B cell (primary cell): ENCODE measurements at regions of chr6 and their contacts with region 1.

Region 1: DNA sequence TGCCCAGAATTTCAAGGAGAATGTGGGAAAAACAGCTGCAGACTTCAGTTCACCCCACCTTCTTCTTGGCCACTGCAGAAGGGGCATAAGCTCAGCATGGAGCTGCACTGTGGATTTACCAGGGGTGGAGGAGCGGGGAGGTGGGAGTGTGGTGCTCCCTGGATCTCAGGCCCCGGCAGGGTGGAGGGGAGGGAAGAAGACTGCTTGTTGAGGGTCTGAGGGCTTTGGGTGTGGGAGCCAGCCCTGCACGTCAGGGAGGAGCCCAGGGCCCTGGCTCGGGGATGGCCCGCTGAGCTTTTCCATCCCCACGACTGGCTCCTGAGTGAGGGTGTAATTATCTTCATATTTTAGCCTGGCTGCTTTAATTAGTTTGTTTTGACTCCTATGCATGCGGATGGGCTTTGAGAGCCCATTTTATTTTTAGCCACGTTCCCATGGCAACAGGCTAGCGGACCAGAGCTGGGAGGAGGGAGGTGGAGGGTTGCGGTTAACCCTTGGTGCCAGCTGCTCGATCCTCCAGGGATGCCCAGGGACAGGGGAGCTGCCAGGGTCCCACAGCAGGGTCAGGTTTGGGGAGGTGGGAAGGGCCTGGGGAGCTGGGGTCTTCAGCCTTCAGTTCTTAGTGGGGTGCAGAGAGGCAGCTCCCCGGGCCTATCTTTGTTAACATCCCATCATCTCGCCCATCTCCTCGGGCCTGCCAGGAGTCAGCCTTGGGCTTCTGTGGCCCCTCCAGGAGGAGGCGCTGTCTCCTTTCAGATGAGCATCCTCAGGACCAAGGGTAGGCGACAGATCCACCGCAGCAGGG is 68.2 kb downstream of the RAB44 start:
- DNase-seq: peak; percentile 88
- ATAC-seq: peak; percentile 91
- H3K4me3 ChIP-seq: peak overlapping the region in 1 of 5 experiments; percentile 9
- H3K4me3 Mint-ChIP-seq: peak overlapping the region; percentile 60
- H3K27ac ChIP-seq: no peak overlapping the region
- H3K27ac Mint-ChIP-seq: peak overlapping the region; percentile 60
- H3K4me1 ChIP-seq: peaks cover 45 to 54% of the 10 kb centered on the region in 2 donors
- H3K4me1 Mint-ChIP-seq: peaks cover 41% of the 10 kb centered on the region
- H3K27me3 ChIP-seq: peaks cover 0 to 3% (median 0%) of the 10 kb centered on the region in 4 experiments
- H3K27me3 Mint-ChIP-seq: no peaks in the 10 kb centered on the region
- CTCF ChIP-seq: peak; percentile 92

Region 2: DNA sequence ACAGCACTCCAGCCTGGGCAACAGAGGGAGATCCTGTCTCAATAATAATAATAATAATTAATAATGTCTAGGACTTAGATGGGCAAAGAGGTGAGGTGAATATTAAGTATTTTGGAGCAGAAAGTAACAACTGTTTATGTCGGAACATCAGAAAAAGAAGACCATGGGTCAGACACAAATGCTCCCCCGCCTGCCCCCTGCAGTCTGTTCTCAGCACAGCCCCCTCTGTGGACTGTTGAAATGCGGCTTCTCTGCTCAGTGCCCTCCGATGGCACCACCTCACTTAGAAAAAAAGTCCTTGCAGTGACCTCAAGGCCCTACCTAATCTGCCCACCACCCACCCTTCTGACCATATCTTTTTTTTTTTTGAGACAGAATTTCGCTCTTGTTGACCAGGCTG is 373.2 kb before region 1 on chr6:
- CTCF ChIA-PET with region 1: no interaction called
- POLR2A ChIA-PET with region 1: no interaction called
- intact Hi-C with region 1: no loop called
- DNase-seq: no peak
- ATAC-seq: no peak
- H3K4me3 ChIP-seq: no peak overlapping the region
- H3K4me3 Mint-ChIP-seq: no peak overlapping the region
- H3K27ac ChIP-seq: no peak overlapping the region
- H3K27ac Mint-ChIP-seq: no peak overlapping the region
- H3K4me1 ChIP-seq: peaks cover 7 to 8% of the 10 kb centered on the region in 2 donors
- H3K4me1 Mint-ChIP-seq: peaks cover 6% of the 10 kb centered on the region
- H3K27me3 ChIP-seq: peaks cover 0 to 25% (median 7%) of the 10 kb centered on the region in 4 experiments
- H3K27me3 Mint-ChIP-seq: peaks cover 22% of the 10 kb centered on the region
- CTCF ChIP-seq: no peak

Region 3: GRCh38 chr6:36780442-36781177 is 14.8 kb after region 1 on chr6:
- CTCF ChIA-PET with region 1: interaction called, 123 read pairs
- POLR2A ChIA-PET with region 1: no interaction called
- intact Hi-C with region 1: loop called (anchors 1 kb)
- DNase-seq: peak; percentile 54
- ATAC-seq: peak; percentile 42
- H3K4me3 ChIP-seq: no peak overlapping the region
- H3K4me3 Mint-ChIP-seq: peak overlapping the region; percentile 64
- H3K27ac ChIP-seq: peak overlapping the region in 1 of 2 donors; percentile 10
- H3K27ac Mint-ChIP-seq: peak overlapping the region; percentile 71
- H3K4me1 ChIP-seq: peaks cover 21 to 28% of the 10 kb centered on the region in 2 donors
- H3K4me1 Mint-ChIP-seq: peaks cover 27% of the 10 kb centered on the region
- H3K27me3 ChIP-seq: peaks cover 0 to 9% (median 0%) of the 10 kb centered on the region in 4 experiments
- H3K27me3 Mint-ChIP-seq: peaks cover 17% of the 10 kb centered on the region
- CTCF ChIP-seq: no peak